ENCODE measurements at regions of chr17 and their contacts with region 1.

Region 1: GRCh38 chr17:50269477-50270434 is 4.5 kb upstream of the TMEM92 start:
- DNase-seq: peak; percentile 15 to 49
- ATAC-seq: peak in 1 of 2 donors; percentile 70
- H3K4me3 ChIP-seq: no peak overlapping the region
- H3K27ac ChIP-seq: no peak overlapping the region
- H3K4me1 ChIP-seq: peaks cover 0 to 8% of the 10 kb centered on the region in 2 donors
- H3K27me3 ChIP-seq: peaks cover 10 to 15% (median 11%) of the 10 kb centered on the region in 3 donors
- CTCF ChIP-seq: peak; percentile 17 to 65 (median 60)
- POLR2A ChIP-seq: no peak

Region 2: DNA sequence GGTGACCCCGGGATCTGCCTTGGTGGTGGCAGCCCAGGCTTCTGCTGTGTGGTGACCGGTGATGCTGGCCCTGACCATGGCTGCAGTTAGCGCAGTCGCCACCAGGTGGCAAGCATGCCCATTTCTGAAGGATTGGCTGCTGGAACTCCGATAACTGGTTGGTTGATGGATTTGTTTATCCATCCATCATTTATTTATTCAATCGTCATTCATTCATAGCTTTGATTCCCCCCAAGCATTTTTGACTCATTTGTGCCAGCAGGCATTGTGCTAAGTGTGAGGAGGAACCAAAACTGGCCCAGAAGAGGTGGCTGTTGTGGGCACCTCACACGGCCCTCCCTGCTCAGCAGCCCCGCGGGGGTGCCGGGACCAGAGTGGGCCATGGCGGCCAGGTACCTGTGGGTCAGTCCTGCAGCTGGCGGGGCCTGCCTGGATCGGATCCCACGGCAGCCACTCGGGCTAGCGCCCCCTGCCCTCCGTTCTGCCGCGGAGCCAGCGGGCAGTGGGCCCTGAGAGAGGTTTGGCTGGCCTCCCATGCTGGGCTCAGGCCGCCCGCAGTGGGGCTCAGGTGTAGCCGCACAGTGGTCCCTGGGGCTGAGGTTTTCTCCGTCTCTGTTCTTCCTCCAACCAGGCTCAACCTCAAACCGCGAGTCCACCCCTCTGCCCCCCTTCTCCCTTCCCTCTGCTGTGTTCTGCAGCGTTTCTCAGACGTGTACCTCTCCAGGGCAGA is 242.7 kb before region 1 on chr17:
- in situ Hi-C with region 1: no loop called
- intact Hi-C with region 1: loop called (anchors 10 kb)
- DNase-seq: peak; percentile 59 to 69
- ATAC-seq: peak; percentile 83 to 85
- H3K4me3 ChIP-seq: no peak overlapping the region
- H3K27ac ChIP-seq: no peak overlapping the region
- H3K4me1 ChIP-seq: peaks cover 0 to 5% of the 10 kb centered on the region in 2 donors
- H3K27me3 ChIP-seq: no peaks in the 10 kb centered on the region
- CTCF ChIP-seq: peak; percentile 89 to 98 (median 97)
- POLR2A ChIP-seq: no peak

Region 3: DNA sequence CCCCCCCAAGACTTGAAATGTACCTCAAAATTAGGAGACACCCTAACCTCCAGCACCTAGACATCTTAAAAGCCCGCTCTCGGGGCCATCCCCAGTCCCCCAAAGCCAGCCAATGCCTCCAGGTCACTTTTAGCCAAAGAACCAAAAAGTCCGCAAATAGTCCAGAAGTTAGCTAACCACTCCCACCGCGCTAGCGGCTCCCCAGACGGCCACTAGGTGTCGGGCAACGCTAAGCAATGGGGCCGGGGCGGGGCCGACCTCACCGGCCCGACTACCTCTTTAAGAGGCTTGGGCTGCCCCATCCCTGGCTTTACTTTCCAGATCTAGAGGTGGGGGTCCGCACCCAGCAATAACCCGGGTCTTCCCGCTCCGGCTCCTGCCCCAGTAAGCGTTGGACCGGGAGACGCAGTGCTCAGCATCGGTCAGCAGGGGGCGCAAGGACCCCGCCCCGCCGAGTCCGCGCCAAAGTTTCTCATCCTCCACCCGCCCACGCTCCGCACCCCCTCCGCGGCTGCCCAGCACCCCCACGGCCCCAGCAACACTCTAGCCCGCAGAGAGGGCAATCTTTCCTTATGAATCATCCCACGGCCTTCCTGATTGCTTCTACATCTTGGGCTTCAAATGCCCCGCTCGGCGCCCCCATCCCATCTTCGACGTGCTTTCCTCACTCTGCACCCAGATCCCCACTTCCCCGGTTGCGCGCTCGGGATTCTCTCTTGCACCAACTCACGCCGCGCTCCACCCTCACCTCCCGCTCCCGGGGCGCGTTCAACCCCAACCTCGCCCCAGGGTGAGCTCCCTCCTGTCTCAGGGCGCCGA is 69.1 kb before region 1 on chr17:
- in situ Hi-C with region 1: loop called in 2 of 4 experiments (anchors 5 kb)
- intact Hi-C with region 1: loop called (anchors 1 kb)
- DNase-seq: peak; percentile 63 to 79
- ATAC-seq: peak; percentile 74 to 76
- H3K4me3 ChIP-seq: peak overlapping the region; percentile 50 to 74 (median 60)
- H3K27ac ChIP-seq: peak overlapping the region; percentile 60 to 76 (median 63)
- H3K4me1 ChIP-seq: peaks cover 0 to 8% of the 10 kb centered on the region in 2 donors
- H3K27me3 ChIP-seq: peaks cover 13 to 22% (median 17%) of the 10 kb centered on the region in 3 donors
- CTCF ChIP-seq: peak; percentile 100
- POLR2A ChIP-seq: no peak

Region 4: GRCh38 chr17:50209472-50210239 is 60.1 kb before region 1 on chr17:
- in situ Hi-C with region 1: loop called in 2 of 4 experiments (anchors 5 kb)
- intact Hi-C with region 1: no loop called
- DNase-seq: peak; percentile 49 to 71
- ATAC-seq: peak; percentile 51 to 53
- H3K4me3 ChIP-seq: no peak overlapping the region
- H3K27ac ChIP-seq: peak overlapping the region; percentile 54 to 74 (median 58)
- H3K4me1 ChIP-seq: peaks cover 4 to 15% of the 10 kb centered on the region in 2 donors
- H3K27me3 ChIP-seq: peaks cover 8 to 30% (median 28%) of the 10 kb centered on the region in 3 donors
- CTCF ChIP-seq: no peak
- POLR2A ChIP-seq: peak in 1 of 2 donors; percentile 37

Region 5: DNA sequence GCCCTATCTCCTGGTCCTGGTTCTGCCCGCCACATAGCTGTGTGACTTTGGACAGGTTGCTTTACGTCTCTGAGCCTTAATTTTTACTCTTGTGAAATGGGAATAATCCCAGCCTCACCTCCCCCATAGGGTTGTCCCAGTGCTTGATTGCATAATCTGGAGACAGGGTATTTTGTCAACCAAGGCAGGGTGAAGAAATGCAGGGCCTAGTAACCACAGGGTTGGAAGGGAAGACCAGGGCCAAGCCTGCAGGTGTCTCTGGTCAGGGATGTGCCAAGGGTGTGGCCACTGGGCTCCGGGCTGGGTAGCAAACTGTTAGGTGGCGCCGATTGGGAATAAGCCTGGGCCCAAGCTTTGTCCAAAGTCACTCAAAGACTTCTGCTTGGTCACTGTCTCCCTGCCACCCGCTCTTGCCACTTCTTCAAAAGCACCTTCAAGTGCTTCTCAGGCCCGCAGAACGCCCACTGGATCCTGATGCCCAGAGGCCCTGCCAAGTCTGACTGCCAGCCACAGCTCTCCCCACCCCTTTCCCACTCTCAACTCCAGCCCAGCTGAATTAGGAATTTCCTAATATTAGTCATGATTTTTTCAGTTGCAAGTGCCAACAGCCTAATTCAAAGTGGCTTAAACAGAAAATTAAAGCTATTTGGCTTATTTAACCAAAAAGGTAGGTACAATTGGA is 47.8 kb before region 1 on chr17:
- in situ Hi-C with region 1: loop called in 1 of 4 experiments (anchors 5 kb)
- intact Hi-C with region 1: no loop called
- DNase-seq: peak in 1 of 2 donors; percentile 52
- ATAC-seq: peak; percentile 62 to 74
- H3K4me3 ChIP-seq: no peak overlapping the region
- H3K27ac ChIP-seq: peak overlapping the region; percentile 22 to 69 (median 48)
- H3K4me1 ChIP-seq: peaks cover 6 to 7% of the 10 kb centered on the region in 2 donors
- H3K27me3 ChIP-seq: no peaks in the 10 kb centered on the region
- CTCF ChIP-seq: no peak
- POLR2A ChIP-seq: no peak

Region 6: DNA sequence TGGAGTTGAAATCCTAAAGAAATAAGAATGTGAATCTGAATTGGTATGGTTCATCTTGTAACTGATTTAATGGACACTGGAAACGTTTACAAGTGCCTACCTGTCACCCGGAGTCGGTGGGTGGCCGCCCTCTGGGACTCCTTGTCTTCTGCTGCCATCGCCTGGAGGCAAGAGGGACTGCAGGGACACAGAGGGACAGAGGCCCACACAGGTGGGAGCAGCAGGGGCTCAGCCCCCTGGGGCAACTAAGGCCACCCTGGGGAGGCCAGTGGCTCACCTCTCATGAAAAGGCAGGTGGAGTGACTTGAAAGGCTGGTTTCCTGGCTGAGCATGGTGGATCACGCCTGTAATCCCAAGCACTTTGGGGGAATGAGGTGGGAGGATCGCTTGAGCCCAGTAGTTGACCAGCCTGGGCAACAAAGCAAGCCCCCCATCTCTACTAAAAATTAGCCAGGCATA is 27.7 kb after region 1 on chr17:
- in situ Hi-C with region 1: no loop called
- intact Hi-C with region 1: loop called (anchors 2 kb)
- DNase-seq: peak; percentile 57 to 63
- ATAC-seq: peak; percentile 77 to 87
- H3K4me3 ChIP-seq: no peak overlapping the region
- H3K27ac ChIP-seq: no peak overlapping the region
- H3K4me1 ChIP-seq: no peaks in the 10 kb centered on the region
- H3K27me3 ChIP-seq: peaks cover 0 to 2% (median 0%) of the 10 kb centered on the region in 3 donors
- CTCF ChIP-seq: peak; percentile 82 to 93 (median 91)
- POLR2A ChIP-seq: no peak